ENCODE measurements at regions of chr1 and their contacts with region 1.

Region 1: DNA sequence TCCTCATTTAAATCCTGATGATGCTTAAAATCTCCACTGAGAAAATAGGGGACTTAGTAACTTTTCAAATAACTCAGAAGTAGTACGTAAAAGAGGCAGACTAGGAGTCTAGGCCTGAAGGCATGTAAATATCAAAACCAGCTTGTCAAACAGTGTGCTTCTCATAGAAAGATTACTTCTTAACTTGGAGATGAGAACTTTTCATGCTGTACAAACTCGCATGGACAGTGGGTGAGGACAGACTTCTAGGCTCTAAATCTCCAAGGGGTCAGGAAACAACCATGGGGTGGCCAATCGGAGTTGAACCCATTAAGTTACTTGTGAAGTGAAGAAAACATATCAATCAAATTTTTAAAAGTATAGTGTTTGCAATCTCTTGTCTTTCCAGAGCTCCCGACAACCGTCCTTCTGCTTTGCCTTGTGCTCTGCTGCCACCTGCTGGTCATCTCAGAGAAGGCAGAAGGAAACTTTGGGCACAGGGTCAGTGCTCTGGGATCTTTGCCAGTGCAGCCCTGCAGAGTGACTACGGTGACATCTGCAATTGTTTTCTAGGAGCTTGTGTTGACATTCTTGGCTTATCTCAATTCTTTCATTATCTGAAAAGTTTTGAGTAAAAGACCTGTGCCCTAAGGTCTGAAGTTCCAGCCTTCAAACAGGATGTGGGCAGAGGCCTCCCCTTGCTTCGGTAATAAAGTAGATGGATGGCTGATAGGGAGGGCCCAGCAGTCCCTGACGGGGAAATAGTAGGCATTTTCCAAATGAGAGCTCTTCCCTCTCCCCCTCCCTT is 105.1 kb upstream of the PDE4B start:
- DNase-seq: peak; percentile 61
- H3K4me3 ChIP-seq: no peak overlapping the region
- H3K27ac ChIP-seq: no peak overlapping the region
- H3K4me1 ChIP-seq: no peaks in the 10 kb centered on the region
- CTCF ChIP-seq: peak; percentile 87

Region 2: DNA sequence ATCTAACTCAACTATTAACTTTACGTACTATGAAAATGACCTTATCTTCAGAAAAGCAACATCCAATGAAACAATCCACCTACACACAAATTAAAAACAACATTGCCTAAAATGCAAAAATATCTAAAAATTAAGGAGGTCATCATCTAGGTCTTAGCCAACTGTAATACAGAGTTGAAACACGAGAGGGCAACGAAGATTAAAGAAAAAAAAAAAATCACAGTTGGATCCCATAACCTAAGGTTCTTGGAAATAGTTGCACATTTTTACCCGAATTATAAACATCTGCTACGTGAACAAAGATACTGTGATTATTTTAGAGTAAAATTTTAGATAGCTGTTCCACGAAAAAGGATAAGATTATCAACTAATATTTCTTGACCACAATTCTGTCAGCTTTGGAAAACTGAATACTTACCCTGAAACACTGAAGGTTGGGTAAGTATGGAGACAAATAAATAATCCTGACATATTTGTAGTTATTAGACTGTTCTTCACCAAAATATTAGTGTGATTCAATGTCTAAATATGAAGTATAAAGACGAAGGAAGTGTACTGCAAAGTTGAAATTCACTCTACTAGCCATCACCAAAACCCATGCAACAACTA is 627.6 kb before region 1 on chr1:
- CTCF ChIA-PET with region 1: no interaction called
- POLR2A ChIA-PET with region 1: no interaction called
- intact Hi-C with region 1: loop called (anchors 1 kb)
- DNase-seq: peak; percentile 31
- H3K4me3 ChIP-seq: no peak overlapping the region
- H3K27ac ChIP-seq: no peak overlapping the region
- H3K4me1 ChIP-seq: peaks cover 13% of the 10 kb centered on the region
- CTCF ChIP-seq: peak; percentile 74

Region 3: DNA sequence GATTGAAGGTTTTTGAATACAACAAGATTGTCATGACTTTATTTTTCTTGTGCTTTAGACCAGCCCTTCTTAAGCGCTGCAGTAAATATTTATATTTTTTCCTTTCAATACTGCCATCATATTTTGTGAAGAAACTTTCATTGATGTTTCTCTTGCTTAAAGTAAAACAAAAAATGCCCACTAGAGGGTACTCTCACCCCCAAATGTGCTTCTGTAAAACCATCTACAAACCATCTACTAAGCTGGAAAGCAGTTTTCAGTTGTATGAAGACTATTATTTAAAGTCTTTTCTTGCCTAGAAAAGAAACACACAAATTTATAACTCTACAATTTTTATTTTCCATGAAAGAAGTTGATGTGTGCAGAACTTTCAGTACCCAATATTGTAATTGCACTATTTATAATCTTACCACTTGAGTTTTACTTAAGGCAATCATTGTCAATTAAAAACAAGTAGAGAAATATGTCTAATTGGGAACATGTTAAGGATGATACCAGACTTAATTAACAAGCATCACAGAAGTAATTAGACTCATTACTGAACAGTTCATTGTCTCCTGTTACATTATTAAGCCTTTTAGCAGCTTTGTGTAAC is 256.4 kb before region 1 on chr1:
- CTCF ChIA-PET with region 1: no interaction called
- POLR2A ChIA-PET with region 1: no interaction called
- intact Hi-C with region 1: loop called (anchors 1 kb)
- DNase-seq: peak; percentile 46
- H3K4me3 ChIP-seq: no peak overlapping the region
- H3K27ac ChIP-seq: no peak overlapping the region
- H3K4me1 ChIP-seq: no peaks in the 10 kb centered on the region
- CTCF ChIP-seq: peak; percentile 89

Region 4: DNA sequence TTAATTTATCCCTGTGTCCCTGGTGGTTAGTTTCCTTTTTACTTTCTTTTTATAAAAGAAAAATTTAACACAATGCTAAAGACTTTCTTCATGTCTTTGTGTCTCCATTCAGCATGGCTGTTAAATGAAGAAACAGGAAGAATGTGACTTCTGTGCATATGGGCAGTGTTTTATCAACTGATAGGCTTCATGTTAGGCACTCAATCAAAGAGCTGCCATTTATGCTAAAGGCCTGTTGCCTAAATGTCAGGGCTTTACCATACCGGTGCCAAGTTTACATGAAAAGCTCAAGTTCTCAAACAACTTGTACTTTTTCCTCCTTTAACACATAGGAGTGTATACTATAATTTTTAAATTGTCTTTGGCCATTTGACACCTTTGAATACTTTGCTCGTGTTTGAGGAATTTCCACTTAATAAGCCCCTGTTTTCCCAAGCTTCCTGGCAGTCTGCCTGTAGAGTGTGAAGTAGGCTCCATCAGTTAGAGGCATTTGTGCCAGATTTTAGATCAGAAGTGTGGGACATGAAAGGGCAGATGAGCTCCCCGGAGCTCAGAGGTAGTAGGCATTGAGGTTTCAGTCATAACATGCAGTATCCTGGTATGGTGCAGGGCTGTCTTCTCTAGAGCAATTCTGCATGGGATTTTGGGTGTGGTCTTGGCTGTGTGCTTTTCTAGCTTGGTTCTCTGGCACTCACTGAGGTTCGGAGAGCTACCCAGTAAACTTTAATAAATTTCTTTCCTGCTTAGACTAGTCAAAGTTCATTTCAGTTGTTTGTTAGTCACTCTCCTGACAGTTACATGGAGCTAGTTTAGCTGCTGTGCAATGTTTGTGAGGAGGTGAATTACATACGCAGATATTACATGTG is 148.1 kb before region 1 on chr1:
- CTCF ChIA-PET with region 1: no interaction called
- POLR2A ChIA-PET with region 1: no interaction called
- intact Hi-C with region 1: no loop called
- DNase-seq: no peak
- H3K4me3 ChIP-seq: no peak overlapping the region
- H3K27ac ChIP-seq: no peak overlapping the region
- H3K4me1 ChIP-seq: no peaks in the 10 kb centered on the region
- CTCF ChIP-seq: no peak

Region 5: GRCh38 chr1:65650682-65651081 is 36.9 kb before region 1 on chr1:
- CTCF ChIA-PET with region 1: no interaction called
- POLR2A ChIA-PET with region 1: no interaction called
- intact Hi-C with region 1: no loop called
- DNase-seq: no peak
- H3K4me3 ChIP-seq: no peak overlapping the region
- H3K27ac ChIP-seq: no peak overlapping the region
- H3K4me1 ChIP-seq: no peaks in the 10 kb centered on the region
- CTCF ChIP-seq: no peak